Activated T-helper 1 cell treated with anti-CD3 and anti-CD28 coated beads, Interleukin-12 subunit alpha, Interleukin-12 subunit beta, Interleukin-2, Interleukin-4 antibody, amounts not matched to agents 30 ng/mL and 10 ng/mL and 1 ng/mL, durations not matched to agents 14 hours and 24 hours and 36 hours (primary cell): ENCODE measurements at regions of chr5 and their contacts with region 1.

Region 1: GRCh38 chr5:179732417-179732917 is at the start of gene MAML1:
- DNase-seq: peak; percentile 100
- H3K4me3 Mint-ChIP-seq: peak within 1 kb of the TSS; percentile 95
- H3K27ac Mint-ChIP-seq: peak within 1 kb of the TSS; percentile 93
- H3K4me1 Mint-ChIP-seq: peaks cover 26% of the 10 kb centered on the region
- H3K27me3 Mint-ChIP-seq: no peaks in the 10 kb centered on the region
- total RNA-seq, gene MAML1: 36.0 and 37.6 TPM in 2 replicates

Region 2: DNA sequence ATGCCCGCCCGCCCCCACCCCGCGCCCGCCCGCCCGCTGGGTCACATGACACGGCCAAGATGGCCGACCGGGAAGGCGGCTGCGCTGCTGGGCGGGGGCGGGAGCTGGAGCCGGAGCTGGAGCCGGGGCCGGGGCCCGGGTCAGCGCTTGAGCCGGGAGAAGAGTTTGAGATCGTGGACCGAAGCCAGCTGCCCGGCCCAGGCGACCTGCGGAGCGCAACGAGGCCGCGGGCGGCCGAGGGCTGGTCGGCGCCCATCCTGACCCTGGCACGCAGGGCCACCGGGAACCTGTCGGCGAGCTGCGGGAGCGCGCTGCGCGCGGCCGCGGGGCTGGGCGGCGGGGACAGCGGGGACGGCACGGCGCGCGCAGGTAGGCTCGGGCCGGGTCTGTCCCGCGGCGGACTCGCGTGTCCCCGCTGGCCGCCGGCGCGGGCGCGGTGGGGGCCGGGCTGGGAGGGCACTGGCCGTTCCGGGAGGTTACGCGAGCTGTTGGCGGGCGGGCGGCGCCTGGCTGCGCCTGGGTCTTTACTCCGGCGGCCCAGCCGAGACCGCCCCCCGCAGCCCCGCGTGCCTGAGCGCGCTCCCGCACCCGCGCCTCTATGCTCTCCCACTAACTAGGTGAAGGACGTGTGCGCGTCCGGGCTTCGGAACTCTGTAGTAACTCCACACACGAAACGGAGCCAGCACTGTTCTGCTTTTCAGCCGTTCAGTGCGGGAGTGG is 181.8 kb before region 1 on chr5 and contains the start of gene RUFY1:
- intact Hi-C with region 1: loop called (anchors 1 kb)
- DNase-seq: peak; percentile 83
- H3K4me3 Mint-ChIP-seq: peak within 1 kb of the TSS; percentile 99
- H3K27ac Mint-ChIP-seq: peak within 1 kb of the TSS; percentile 99
- H3K4me1 Mint-ChIP-seq: peaks cover 28% of the 10 kb centered on the region
- H3K27me3 Mint-ChIP-seq: peaks cover 2% of the 10 kb centered on the region
- total RNA-seq, gene RUFY1: 37.0 and 38.3 TPM in 2 replicates

Region 3: DNA sequence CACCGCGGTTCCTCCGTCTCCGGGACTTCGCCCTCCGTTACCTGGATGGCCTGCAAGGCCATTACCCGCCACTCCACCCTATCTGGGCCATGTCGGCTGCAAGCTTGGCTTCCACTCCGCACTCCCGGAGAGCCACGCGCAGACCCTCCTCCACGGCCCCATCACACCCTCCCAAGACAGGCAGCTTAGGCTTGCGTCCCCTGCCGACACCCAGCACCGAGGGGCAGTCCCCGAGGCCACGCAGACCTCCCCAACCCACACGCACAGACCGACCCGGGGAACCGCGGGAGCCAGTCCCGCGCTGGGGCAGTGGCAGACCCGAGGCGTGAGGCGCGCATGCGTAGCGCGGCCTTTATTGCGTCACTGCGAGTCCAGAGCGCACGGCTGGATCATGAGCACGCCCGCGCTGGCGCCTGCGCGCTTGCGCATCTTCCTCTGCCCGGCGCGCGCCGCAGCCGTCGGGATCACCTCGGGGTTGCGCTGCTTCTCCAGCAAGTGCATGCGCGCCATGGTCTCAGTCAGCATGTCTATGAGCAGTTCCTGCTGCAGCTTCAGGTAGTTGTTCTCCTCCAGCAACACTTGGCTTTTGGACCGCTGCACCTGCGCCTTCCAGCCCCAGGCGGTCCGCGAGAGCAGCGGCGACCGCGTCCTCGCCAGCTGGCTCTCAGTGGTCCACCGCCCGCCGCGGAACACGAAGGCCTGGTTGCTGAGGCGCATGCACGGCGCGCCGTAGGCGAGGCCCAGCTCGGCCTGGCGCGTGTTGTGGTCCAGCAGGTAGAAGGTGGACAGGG is 54.0 kb before region 1 on chr5:
- intact Hi-C with region 1: loop called (anchors 1 kb)
- DNase-seq: peak; percentile 93
- H3K4me3 Mint-ChIP-seq: peak overlapping the region; percentile 99
- H3K27ac Mint-ChIP-seq: peak overlapping the region; percentile 98
- H3K4me1 Mint-ChIP-seq: peaks cover 21% of the 10 kb centered on the region
- H3K27me3 Mint-ChIP-seq: no peaks in the 10 kb centered on the region

Region 4: DNA sequence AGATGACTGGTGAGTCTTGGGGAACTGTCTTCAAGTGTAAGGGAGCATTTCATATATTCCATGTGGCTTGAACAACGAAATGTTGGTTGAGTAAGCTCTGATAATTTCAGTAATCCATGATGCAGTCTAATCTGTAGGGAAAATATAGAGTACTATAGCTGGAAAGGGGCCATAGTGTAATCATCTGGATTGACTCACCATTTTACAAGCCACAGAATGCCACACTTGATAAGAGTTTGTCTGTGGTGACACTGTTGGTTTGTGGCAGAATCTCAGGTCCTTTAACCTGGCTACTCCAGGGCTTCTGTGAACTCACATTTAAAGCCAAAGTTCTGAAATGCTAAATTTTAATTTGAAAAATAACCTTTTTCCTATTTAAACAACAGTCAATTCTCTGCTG is 16.2 kb before region 1 on chr5:
- intact Hi-C with region 1: loop called (anchors 2 kb)
- DNase-seq: no peak
- H3K4me3 Mint-ChIP-seq: no peak overlapping the region
- H3K27ac Mint-ChIP-seq: peak overlapping the region; percentile 85
- H3K4me1 Mint-ChIP-seq: peaks cover 15% of the 10 kb centered on the region
- H3K27me3 Mint-ChIP-seq: no peaks in the 10 kb centered on the region

Region 5: DNA sequence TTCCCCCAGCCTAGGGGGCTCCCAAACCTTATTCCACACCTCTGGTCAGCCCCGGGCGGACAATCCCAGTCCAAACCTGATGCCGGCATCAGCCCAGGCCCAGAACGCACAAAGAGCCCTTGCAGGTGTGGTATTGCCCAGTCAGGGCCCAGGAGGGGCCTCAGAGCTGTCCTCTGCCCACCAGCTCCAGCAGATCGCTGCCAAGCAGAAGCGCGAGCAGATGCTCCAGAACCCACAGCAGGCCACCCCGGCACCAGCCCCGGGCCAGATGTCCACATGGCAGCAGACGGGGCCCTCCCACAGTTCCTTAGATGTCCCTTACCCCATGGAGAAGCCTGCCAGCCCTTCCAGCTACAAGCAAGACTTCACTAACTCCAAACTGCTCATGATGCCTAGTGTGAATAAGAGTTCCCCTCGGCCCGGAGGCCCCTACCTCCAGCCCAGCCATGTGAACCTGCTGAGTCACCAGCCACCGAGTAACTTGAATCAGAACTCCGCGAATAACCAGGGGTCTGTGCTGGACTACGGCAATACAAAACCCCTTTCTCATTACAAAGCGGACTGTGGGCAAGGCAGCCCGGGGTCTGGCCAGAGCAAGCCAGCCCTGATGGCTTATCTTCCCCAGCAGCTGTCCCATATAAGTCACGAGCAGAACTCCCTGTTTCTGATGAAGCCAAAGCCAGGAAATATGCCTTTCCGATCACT is 33.7 kb after region 1 on chr5:
- intact Hi-C with region 1: no loop called
- DNase-seq: no peak
- H3K4me3 Mint-ChIP-seq: no peak overlapping the region
- H3K27ac Mint-ChIP-seq: no peak overlapping the region
- H3K4me1 Mint-ChIP-seq: peaks cover 35% of the 10 kb centered on the region
- H3K27me3 Mint-ChIP-seq: no peaks in the 10 kb centered on the region

Region 6: DNA sequence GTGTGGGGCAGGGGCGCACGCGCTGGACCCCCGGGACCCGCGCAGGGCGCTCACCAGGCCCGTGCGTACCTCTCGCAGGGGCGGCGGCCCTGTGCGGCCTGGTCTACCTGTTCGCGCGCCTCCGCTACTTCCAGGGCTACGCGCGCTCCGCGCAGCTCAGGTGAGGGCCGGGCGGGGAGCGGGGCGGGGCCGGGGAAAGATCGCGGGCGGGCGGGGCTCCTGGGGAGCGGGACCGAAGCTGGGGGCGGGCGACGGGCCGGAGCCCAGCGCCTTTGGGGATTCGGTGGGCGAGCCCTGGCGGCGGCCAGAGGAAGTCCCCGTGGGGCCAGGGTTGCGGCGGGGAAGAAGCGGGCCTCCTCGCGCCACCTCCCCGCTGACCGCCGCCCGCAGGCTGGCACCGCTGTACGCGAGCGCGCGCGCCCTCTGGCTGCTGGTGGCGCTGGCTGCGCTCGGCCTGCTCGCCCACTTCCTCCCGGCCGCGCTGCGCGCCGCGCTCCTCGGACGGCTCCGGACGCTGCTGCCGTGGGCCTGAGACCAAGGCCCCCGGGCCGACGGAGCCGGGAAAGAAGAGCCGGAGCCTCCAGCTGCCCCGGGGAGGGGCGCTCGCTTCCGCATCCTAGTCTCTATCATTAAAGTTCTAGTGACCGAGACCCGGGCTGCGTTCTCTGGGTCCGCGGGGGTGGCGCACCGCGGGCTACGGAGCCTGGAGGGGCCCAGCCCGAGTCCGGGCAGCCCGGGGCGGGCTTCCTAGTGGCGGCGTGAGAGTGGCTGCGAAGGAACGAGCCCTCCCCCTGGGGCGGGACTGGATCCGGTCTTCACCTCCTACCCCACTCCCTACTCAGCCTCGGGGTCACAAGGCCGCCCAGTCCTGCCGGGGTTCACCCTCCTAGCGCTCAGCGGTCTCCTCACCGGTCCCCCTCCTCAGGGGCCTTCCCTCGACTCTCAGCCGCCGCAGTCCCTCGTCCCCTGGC is 63.7 kb after region 1 on chr5:
- intact Hi-C with region 1: loop called (anchors 1 kb)
- DNase-seq: peak; percentile 63
- H3K4me3 Mint-ChIP-seq: peak overlapping the region; percentile 67
- H3K27ac Mint-ChIP-seq: peak overlapping the region; percentile 40
- H3K4me1 Mint-ChIP-seq: peaks cover 8% of the 10 kb centered on the region
- H3K27me3 Mint-ChIP-seq: no peaks in the 10 kb centered on the region

Region 7: GRCh38 chr5:179907570-179908324 is 175.3 kb after region 1 on chr5 and contains the start of gene TBC1D9B:
- intact Hi-C with region 1: loop called (anchors 2 kb)
- DNase-seq: peak; percentile 69
- H3K4me3 Mint-ChIP-seq: peak within 1 kb of the TSS; percentile 95
- H3K27ac Mint-ChIP-seq: peak within 1 kb of the TSS; percentile 89
- H3K4me1 Mint-ChIP-seq: peaks cover 18% of the 10 kb centered on the region
- H3K27me3 Mint-ChIP-seq: peaks cover 2% of the 10 kb centered on the region
- total RNA-seq, gene TBC1D9B: 123 and 127 TPM in 2 replicates